ENCODE measurements at regions of chr7 and their contacts with region 1.

Region 1: DNA sequence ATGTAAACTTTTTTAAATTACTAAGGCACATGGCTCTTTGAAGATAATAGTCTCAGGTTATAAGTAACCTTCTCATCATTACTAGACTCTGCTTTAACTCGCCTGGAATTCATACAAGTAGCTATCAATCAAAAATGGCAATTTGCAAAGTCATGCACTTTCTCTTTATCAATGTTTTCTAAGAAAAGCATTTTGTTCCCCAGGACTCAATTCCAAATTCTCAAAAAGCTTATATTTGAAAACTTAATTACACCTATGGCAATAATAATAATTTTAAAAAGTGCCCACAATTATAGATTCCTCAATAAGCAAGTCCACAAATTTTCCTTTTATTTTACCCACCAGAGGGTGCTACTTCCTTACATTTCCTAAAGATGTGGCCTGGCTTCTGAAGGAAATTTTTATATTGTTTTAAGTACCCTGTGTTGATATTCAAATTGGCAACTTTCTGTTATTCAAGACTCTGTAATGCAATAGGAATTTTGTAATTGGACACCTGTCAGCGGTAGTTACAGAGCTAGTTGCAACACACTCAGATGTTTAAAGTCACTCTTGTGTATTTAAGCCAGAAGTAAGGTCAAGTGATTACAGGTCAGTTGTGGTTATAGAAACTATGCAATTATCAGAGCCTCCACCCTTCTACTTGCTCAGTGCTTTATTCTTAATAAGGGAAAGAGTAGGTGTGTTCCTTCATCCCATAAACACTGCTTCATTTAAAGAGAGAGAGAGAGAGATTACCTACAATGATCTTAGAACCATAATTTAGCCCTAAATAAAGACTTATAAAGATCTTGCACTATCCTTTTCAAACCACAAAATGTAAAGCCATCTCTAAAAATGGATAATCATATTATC is 47.1 kb upstream of the HYAL4 start:
- DNase-seq: peak; percentile 86
- ATAC-seq: peak; percentile 93
- H3K4me3 ChIP-seq: no peak overlapping the region
- H3K27ac ChIP-seq: no peak overlapping the region
- H3K4me1 ChIP-seq: peaks cover 40% of the 10 kb centered on the region
- H3K27me3 ChIP-seq: no peaks in the 10 kb centered on the region
- CTCF ChIP-seq: peak; percentile 27
- EP300 ChIP-seq: peak in 1 of 2 experiments; percentile 83; a peak in 3 of 4 replicates
- POLR2A ChIP-seq: no peak
- RAD21 ChIP-seq: peak; percentile 23; the same call in 1 of the 2 replicates

Region 2: DNA sequence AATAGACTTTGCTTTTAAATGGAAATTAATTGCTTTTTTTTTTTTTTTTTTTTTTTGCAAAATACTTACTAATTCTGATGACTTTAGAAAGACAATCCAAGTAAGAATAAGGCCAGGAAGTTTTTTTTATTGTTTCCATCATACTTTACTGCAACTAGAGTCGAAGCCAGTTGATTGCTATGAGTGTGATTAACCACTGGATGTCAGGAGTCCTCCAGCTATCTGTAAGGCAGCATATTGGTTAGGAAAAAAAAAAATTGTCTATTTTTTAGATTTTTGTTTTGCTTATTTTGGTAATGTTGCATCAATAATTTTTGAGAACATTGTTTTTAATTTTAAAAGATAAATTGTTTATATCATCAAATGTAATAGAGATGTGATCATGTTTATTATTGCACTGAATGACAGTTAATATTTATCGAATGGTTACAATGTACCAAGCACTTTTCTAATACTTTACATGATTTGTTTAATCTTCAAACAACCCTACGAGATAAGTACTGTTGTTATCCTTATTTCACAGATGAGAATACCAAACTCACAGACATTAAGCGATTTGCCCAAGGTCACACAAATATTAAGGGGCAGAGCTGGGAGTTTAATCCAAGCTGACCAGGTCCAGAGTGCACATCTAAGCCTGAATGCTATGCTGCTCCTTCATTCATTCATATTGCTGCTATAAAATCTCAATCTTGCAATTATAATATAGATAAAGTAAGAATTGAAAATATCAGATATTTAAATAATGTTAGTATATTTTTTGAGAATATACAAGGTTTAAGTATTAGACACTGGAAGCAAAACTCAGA is 162.1 kb before region 1 on chr7:
- CTCF ChIA-PET with region 1: no interaction called
- POLR2A ChIA-PET with region 1: no interaction called
- in situ Hi-C with region 1: no loop called
- intact Hi-C with region 1: loop called (anchors 5 kb)
- DNase-seq: peak; percentile 5
- ATAC-seq: peak; percentile 60; the same call in 2 of the 3 replicates
- H3K4me3 ChIP-seq: no peak overlapping the region
- H3K27ac ChIP-seq: no peak overlapping the region
- H3K4me1 ChIP-seq: no peaks in the 10 kb centered on the region
- H3K27me3 ChIP-seq: no peaks in the 10 kb centered on the region
- CTCF ChIP-seq: peak; percentile 55
- EP300 ChIP-seq: no peak
- POLR2A ChIP-seq: no peak
- RAD21 ChIP-seq: no peak; the same call in 1 of the 2 replicates

Region 3: DNA sequence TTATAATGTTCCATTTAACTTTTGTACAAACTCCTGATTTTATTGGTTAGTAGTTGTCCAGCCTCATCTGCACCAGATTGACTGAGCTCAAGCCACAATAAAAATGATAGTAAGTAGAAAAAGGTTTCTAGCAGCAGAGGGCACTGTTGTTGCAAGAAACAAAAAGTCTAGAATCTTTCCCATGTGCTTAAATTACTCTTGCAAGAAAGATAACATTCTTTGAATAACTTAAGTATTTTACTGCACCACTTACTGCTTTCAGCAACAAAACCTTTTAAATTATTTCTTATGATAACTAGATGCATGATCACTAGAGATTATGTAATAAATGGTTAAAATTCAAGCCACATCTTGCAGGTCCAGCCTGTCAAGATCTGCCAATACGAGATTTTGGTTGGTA is 115.2 kb before region 1 on chr7:
- CTCF ChIA-PET with region 1: no interaction called
- POLR2A ChIA-PET with region 1: no interaction called
- in situ Hi-C with region 1: no loop called
- intact Hi-C with region 1: loop called (anchors 1 kb)
- DNase-seq: peak; percentile 52
- ATAC-seq: peak; percentile 66
- H3K4me3 ChIP-seq: no peak overlapping the region
- H3K27ac ChIP-seq: no peak overlapping the region
- H3K4me1 ChIP-seq: 0 out of 2 replicates have a peak, but pooled peaks cover 8% of the 10 kb centered on the region
- H3K27me3 ChIP-seq: no peaks in the 10 kb centered on the region
- CTCF ChIP-seq: peak; percentile 62
- EP300 ChIP-seq: no peak
- POLR2A ChIP-seq: no peak
- RAD21 ChIP-seq: peak; percentile 52; the same call in 1 of the 2 replicates

Region 4: DNA sequence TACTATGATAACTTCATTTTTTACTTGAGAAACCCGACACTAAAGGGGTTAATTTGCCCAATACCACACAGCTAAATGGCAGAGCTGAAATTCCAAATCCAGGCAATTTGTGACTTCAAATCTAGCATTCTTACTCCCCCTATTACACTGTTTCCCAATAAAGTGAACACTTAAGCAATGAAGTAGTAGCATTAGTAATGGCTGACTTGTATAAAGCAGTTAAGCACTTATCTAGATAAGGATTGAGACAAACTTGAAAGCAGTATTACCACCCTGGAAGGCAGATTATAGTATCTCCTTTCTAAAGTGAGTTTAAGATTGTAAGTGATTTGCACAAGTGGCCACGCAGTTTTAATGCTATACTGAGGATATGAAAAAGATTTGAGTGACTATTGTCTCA is 88.4 kb before region 1 on chr7:
- CTCF ChIA-PET with region 1: no interaction called
- POLR2A ChIA-PET with region 1: no interaction called
- in situ Hi-C with region 1: no loop called
- intact Hi-C with region 1: loop called (anchors 5 kb)
- DNase-seq: no peak
- ATAC-seq: no peak
- H3K4me3 ChIP-seq: no peak overlapping the region
- H3K27ac ChIP-seq: no peak overlapping the region
- H3K4me1 ChIP-seq: peaks cover 25% of the 10 kb centered on the region
- H3K27me3 ChIP-seq: no peaks in the 10 kb centered on the region
- CTCF ChIP-seq: no peak
- EP300 ChIP-seq: no peak
- POLR2A ChIP-seq: no peak
- RAD21 ChIP-seq: no peak

Region 5: DNA sequence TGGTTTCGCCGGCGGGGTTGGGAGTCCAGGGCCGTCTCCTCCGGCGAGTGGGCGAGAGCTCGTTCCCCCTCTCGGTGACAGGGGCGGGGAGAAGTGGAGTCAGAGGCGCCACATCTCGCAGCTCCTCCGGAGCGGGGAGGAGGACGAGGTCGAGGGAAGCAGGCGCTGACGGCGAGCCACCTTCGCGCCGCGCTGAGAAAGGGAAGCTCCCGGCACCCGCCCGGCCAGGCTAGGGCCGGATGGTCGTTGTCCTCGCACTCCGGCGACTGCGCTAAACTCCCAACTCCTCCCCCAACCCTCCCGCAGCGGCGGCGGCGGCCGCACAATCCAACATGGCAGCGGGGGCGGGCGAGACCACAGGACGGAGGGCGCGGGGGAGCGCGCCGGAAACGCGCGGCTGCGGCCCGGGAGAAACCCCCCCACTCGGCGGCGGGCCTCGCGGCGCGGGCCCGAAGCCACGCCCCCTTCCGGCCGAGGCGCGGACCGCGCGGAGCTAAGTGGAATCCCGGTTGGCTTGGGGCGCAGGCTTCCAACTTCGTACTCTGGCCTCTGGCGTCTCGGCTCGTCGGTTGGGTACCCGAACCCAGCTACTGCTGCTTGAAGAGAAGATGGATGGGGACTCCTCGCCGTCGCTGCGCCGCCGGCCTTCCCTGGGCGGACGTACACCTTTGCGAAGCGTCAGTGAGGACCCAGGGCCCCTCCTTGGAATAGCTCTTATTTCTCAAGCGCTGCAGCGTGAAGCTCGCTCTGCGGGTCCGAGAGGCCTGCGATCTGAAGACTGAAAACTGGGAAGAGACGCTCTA is 49.0 kb before region 1 on chr7 and contains the start of gene WASL:
- CTCF ChIA-PET with region 1: no interaction called
- POLR2A ChIA-PET with region 1: interaction called, 13 read pairs
- in situ Hi-C with region 1: no loop called
- intact Hi-C with region 1: loop called (anchors 2 kb)
- DNase-seq: peak; percentile 81
- ATAC-seq: peak; percentile 84
- H3K4me3 ChIP-seq: peak within 1 kb of the TSS; percentile 94 to 99 (median 97)
- H3K27ac ChIP-seq: peak within 1 kb of the TSS; percentile 97
- H3K4me1 ChIP-seq: peaks cover 41% of the 10 kb centered on the region
- H3K27me3 ChIP-seq: no peaks in the 10 kb centered on the region; a peak in 1 of 5 replicates
- CTCF ChIP-seq: peak; percentile 36
- EP300 ChIP-seq: peak in 1 of 2 experiments; percentile 48; a peak in 1 of 4 replicates
- POLR2A ChIP-seq: peak; percentile 93 to 97
- RAD21 ChIP-seq: no peak
- total RNA-seq, gene WASL: 12.8 and 18.7 TPM in 2 replicates

Region 6: DNA sequence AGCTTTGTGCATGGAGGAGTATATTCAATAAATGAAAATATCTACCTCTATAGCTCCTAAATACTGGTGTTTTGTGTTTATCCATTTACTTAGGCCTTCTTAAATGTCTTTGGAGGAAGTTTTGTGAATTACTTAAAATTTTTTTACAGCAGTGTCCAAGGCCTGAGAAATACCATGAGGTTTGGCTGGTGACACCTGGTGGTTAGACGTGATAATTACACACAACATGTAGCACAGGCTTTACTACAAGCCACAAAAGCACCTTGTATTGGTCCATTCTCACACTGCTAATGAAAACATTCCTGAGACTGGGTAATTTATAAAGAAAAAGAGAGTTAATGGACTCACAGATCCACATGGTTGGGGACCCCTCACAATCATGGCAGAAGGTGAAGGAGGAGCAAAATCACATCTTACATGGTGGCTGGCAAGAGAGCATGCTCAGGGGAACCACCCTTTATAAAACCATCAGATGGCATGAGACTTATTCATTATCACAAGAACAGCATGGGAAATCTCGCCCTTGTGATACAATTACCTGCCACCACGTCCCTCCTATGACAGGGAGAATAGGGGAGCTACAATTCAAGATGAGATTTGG is 67.7 kb after region 1 on chr7:
- CTCF ChIA-PET with region 1: interaction called, 16 read pairs
- POLR2A ChIA-PET with region 1: no interaction called
- in situ Hi-C with region 1: no loop called
- intact Hi-C with region 1: loop called (anchors 1 kb)
- DNase-seq: peak; percentile 62
- ATAC-seq: peak; percentile 91
- H3K4me3 ChIP-seq: no peak overlapping the region
- H3K27ac ChIP-seq: no peak overlapping the region
- H3K4me1 ChIP-seq: no peaks in the 10 kb centered on the region
- H3K27me3 ChIP-seq: no peaks in the 10 kb centered on the region
- CTCF ChIP-seq: peak; percentile 77
- EP300 ChIP-seq: no peak
- POLR2A ChIP-seq: no peak
- RAD21 ChIP-seq: peak; percentile 55; the same call in 1 of the 2 replicates

Measured in HepG2 (cell line).